ENCODE measurements at regions of chr17 and their contacts with region 1.

Region 1: GRCh38 chr17:50865984-50866774 is at the start of gene TOB1:
- DNase-seq: peak; percentile 90 to 97
- H3K4me3 ChIP-seq: peak within 1 kb of the TSS; percentile 81 to 99 (median 91)
- H3K27ac ChIP-seq: peak within 1 kb of the TSS; percentile 95
- H3K4me1 ChIP-seq: peaks cover 0 to 2% (median 0%) of the 10 kb centered on the region in 4 experiments; a peak in 3 of 7 replicates
- H3K27me3 ChIP-seq: no peaks in the 10 kb centered on the region
- CTCF ChIP-seq: no peak
- EP300 ChIP-seq: no peak
- POLR2A ChIP-seq: peak; percentile 98 to 100
- RAD21 ChIP-seq: 0 out of 4 replicates have a peak, but pooled peaks of 1 of the 2 experiments have one; percentile 9
- total RNA-seq, gene TOB1: 20.8 and 26.7 TPM in 2 replicates

Region 2: DNA sequence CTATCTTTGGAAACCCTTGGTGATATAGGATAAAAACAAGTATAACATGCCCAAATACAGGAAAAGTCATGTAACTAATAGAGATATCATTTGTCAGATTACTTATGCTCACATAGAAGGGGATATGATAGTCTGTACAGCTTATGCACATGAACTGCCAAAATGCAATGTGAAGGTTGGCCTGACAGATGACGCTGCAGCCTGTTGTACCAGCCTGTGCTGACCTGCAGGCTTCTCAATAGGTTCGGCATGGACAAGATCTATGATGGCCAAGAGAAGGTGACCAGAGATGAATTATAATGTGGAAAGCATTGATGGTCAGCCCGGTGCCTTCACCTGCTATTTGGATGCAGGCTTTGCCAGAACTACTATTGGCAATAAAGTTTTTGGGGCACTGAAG is 18.1 kb before region 1 on chr17:
- CTCF ChIA-PET with region 1: interaction called, 70 read pairs
- POLR2A ChIA-PET with region 1: interaction called, 52 read pairs
- DNase-seq: no peak
- H3K4me3 ChIP-seq: no peak overlapping the region
- H3K27ac ChIP-seq: no peak overlapping the region
- H3K4me1 ChIP-seq: peaks cover 2 to 4% (median 3%) of the 10 kb centered on the region in 4 experiments; a peak in 3 of 7 replicates
- H3K27me3 ChIP-seq: no peaks in the 10 kb centered on the region
- CTCF ChIP-seq: no peak
- EP300 ChIP-seq: no peak
- POLR2A ChIP-seq: no peak
- RAD21 ChIP-seq: 0 out of 4 replicates have a peak, but pooled peaks of 1 of the 2 experiments have one; percentile 5

Region 3: DNA sequence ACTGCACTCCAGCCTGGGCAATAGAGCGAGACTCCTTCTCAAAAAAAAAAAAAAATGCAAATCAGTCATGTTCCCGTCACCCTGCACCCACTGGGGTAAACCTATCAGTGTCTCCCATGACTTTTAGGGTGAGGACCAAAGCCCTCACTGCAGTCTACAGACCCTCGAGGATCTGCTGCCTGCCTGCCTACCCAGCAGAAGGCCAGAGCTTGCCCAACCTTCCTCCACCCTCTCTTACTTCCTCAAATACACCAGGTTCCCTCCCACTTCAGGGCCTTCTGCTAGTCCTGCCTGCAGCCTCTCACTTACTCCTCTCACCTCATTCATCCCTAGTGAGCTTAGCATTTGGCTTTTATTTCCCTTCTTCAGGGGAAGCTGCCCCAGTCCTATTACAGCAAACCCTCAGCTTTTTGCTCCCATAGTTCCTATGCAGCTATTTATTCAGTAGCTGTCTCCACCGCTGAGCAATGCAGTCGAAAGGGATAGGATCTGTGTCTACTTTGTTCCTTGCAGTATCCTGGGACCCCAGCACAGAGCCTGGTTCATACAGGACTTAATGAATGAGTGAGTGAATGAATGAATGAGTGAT is 17.8 kb after region 1 on chr17:
- CTCF ChIA-PET with region 1: interaction called, 3 read pairs
- POLR2A ChIA-PET with region 1: interaction called, 72 read pairs
- DNase-seq: no peak
- H3K4me3 ChIP-seq: no peak overlapping the region
- H3K27ac ChIP-seq: no peak overlapping the region
- H3K4me1 ChIP-seq: peaks cover 0 to 5% (median under 1%) of the 10 kb centered on the region in 4 experiments; a peak in 4 of 7 replicates
- H3K27me3 ChIP-seq: no peaks in the 10 kb centered on the region
- CTCF ChIP-seq: no peak
- EP300 ChIP-seq: no peak
- POLR2A ChIP-seq: no peak
- RAD21 ChIP-seq: no peak

Region 4: GRCh38 chr17:50904521-50905459 is 38.6 kb after region 1 on chr17:
- CTCF ChIA-PET with region 1: interaction called, 16 read pairs
- POLR2A ChIA-PET with region 1: interaction called, 85 read pairs
- DNase-seq: peak in 1 of 2 experiments; percentile 72
- H3K4me3 ChIP-seq: no peak overlapping the region
- H3K27ac ChIP-seq: peak overlapping the region; percentile 32; the same call in 1 of the 2 replicates
- H3K4me1 ChIP-seq: peaks cover 9 to 39% (median 28%) of the 10 kb centered on the region in 4 experiments
- H3K27me3 ChIP-seq: no peaks in the 10 kb centered on the region
- CTCF ChIP-seq: no peak
- EP300 ChIP-seq: no peak
- POLR2A ChIP-seq: no peak
- RAD21 ChIP-seq: no peak

Region 5: GRCh38 chr17:50931144-50931908 is 65.1 kb after region 1 on chr17:
- CTCF ChIA-PET with region 1: interaction called, 6 read pairs
- POLR2A ChIA-PET with region 1: interaction called, 35 read pairs
- DNase-seq: peak in 1 of 2 experiments; percentile 77
- H3K4me3 ChIP-seq: peak overlapping the region; percentile 36 to 70 (median 47)
- H3K27ac ChIP-seq: no peak overlapping the region
- H3K4me1 ChIP-seq: peaks cover 0 to 9% (median 6%) of the 10 kb centered on the region in 4 experiments
- H3K27me3 ChIP-seq: peaks cover 0 to 6% (median 5%) of the 10 kb centered on the region in 4 experiments; a peak in 4 of 7 replicates
- CTCF ChIP-seq: no peak
- EP300 ChIP-seq: no peak
- POLR2A ChIP-seq: peak in 1 of 2 experiments; percentile 16; a peak in 1 of 3 replicates
- RAD21 ChIP-seq: 0 out of 4 replicates have a peak, but pooled peaks of 1 of the 2 experiments have one; percentile 2

Region 6: DNA sequence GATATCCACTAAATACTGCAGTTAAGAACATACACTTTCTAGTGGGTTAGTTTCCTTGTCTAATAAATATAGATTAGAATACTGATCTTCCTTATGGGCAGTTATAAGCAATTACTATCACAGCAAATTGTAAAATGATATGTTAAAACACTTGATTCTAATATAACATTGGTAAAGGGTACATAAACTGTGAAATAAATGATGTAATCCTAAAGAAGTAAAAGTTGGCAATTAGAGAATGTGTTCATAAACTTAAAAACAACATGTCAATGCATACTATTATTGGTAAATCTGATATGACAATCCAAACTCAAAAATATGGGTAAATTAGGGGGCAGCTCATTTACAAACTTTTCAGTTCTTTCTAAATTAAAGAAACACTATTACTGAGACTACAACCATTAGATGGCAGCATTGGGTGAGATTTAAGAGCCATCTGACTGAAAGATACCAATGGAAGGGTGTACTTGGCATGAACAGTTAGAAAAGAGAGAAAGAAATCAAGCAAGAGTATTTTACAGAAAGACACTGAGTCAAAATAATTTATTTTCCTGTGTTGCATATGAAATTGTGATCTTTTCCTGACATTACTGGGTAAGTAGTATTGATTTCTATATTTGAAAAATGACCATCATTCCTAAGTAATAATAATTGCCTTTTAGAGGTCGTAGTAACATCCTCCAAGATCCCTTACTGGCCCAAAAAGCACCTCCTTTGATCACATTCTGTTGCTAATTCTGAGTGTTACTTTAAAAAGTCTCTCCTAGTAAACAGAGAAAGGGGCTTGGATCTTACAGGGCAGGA is 134.9 kb after region 1 on chr17:
- CTCF ChIA-PET with region 1: no interaction called
- POLR2A ChIA-PET with region 1: no interaction called
- DNase-seq: no peak
- H3K4me3 ChIP-seq: no peak overlapping the region
- H3K27ac ChIP-seq: no peak overlapping the region
- H3K4me1 ChIP-seq: no peaks in the 10 kb centered on the region
- H3K27me3 ChIP-seq: no peaks in the 10 kb centered on the region
- CTCF ChIP-seq: peak in 2 of 3 experiments; percentile 39 to 48; a peak in 2 of 4 replicates
- EP300 ChIP-seq: no peak
- POLR2A ChIP-seq: no peak
- RAD21 ChIP-seq: peak; percentile 75 to 78

Region 7: DNA sequence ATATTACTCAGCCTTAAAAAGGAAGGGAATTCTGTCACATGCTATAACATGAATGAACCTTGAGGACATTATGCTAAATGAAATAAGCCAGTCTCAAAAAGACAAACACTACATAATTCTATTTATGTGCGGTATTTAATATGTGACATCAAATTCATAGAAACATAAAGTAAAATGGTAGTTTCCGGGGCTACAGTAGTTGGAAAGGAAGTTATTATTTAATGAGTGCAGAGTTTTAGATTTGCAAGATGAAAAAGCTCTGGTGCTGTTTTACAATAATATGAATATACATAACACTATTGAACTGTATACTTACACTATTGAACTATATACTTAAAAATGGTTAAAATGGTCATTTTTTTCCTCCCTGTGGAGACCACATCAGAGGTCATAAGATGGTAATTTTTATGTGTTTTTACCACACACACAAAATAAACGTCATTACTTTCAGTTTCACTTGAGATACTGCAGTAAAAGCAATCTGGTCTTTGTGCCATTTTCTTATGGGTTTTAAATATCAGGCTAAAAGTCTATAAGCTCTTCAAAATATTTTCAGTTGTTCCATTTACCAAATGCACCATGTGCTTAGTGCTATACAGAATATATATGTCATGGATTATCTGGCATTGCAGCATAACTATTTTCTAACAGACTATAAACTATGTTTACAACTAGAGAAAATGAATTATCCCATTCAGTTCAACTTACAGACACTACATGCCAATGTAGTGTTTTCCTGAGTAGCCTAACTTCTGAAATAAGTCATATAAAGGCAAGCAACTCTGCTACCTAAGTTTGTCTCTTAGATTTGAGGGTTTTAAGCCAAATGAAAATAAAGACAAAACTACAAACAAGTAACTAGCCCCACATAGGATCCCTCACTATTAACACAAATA is 163.6 kb after region 1 on chr17:
- CTCF ChIA-PET with region 1: no interaction called
- POLR2A ChIA-PET with region 1: no interaction called
- DNase-seq: no peak
- H3K4me3 ChIP-seq: no peak overlapping the region
- H3K27ac ChIP-seq: no peak overlapping the region
- H3K4me1 ChIP-seq: no peaks in the 10 kb centered on the region
- H3K27me3 ChIP-seq: no peaks in the 10 kb centered on the region
- CTCF ChIP-seq: no peak
- EP300 ChIP-seq: no peak
- POLR2A ChIP-seq: no peak
- RAD21 ChIP-seq: no peak